CD4-positive, alpha-beta memory T cell (primary cell): ENCODE measurements at regions of chr16 and their contacts with region 1.

Region 1: GRCh38 chr16:86016201-86016871 is 117.4 kb downstream of the IRF8 start:
- DNase-seq: peak in 4 of 5 donors; percentile 42 to 45 (median 43)
- H3K4me3 ChIP-seq: no peak overlapping the region
- H3K4me3 Mint-ChIP-seq: no peak overlapping the region
- H3K27ac ChIP-seq: no peak overlapping the region
- H3K27ac Mint-ChIP-seq: no peak overlapping the region
- H3K4me1 ChIP-seq: no peaks in the 10 kb centered on the region
- H3K4me1 Mint-ChIP-seq: no peaks in the 10 kb centered on the region
- H3K27me3 ChIP-seq: no peaks in the 10 kb centered on the region
- H3K27me3 Mint-ChIP-seq: peaks cover 20 to 25% of the 10 kb centered on the region in 2 donors

Region 2: DNA sequence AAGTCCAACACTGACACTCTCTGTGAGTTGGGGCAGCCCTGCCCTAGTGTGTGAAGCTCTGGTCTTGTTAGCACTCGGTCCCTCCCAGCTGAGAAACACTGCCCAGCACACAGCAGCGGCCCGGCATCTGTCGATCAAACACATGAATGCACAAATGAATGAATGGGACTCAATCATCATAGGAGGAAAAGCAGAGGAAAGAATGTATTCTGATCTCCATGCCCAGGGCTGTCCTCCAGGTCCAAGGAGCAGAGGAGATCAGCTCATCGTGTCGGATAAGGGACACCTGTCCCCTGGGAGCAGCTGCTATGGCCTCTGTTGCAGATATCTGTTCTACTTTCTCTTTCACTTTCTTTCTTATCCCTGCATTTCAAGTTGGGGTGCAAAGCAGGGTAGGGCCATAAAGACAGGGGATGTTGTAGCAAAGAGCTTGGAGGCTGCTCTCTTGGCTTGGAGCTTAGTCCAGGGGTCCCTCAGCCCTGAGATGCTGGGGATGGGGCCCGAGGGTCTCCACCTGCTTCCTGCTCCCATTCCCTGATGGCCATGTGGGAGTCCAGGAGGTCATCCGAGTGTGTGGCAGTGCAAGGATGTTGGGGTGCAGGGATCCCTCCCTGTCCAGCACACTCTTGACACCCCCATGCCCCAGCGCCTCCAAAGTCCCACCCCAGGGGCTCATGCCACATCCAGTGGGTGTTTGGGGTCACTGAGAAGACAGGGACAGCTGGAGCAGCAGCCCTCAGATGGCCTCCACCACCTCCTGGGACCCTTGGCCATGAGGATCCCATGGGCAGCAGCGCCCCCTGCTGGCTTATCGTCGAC is 29.2 kb before region 1 on chr16:
- CTCF ChIA-PET with region 1: interaction called, 11 read pairs
- POLR2A ChIA-PET with region 1: no interaction called
- intact Hi-C with region 1: no loop called
- DNase-seq: peak in 2 of 5 donors; percentile 16 to 28
- H3K4me3 ChIP-seq: no peak overlapping the region
- H3K4me3 Mint-ChIP-seq: peak overlapping the region in 2 of 8 donors; percentile 12 to 16
- H3K27ac ChIP-seq: no peak overlapping the region
- H3K27ac Mint-ChIP-seq: no peak overlapping the region
- H3K4me1 ChIP-seq: peaks cover 6% of the 10 kb centered on the region
- H3K4me1 Mint-ChIP-seq: peaks cover 7 to 40% (median 21%) of the 10 kb centered on the region in 4 donors
- H3K27me3 ChIP-seq: peaks cover 5% of the 10 kb centered on the region
- H3K27me3 Mint-ChIP-seq: peaks cover 17 to 20% of the 10 kb centered on the region in 2 donors